ENCODE measurements at regions of chr10 and their contacts with region 1.

Region 1: DNA sequence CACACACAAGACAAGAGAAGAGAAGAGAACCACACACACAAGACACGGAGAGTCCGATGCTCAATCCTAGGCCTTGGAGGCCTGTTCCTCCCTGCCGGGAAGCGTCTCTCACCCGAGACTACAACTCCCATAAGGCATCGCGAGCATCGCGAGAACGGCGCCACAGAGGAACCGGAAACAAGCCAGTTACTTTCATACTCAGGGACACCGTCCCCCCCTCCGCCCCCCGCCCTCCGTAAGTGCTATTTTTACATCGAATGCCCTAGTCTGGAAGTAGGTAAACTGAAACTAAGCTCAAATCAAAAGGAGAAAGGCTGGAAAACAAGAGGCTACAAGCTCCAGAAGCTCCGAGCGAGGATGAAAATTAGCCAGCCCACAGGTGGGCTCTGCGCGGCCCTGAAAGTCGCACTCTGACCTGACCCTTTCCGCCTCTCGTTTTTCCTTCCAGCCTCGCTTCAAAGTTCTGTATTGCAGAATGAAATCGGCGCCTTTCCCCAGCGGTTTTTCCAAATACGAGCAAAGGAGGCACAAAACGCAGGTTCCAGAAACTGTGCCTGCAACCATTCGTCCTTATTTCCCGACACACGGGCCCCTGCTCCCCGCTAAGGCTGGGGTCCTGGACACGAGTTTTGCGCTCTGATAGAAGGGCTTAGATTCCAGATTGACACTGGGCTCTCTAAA is 11.5 kb upstream of the DNAJC12 start:
- DNase-seq: peak; percentile 96
- ATAC-seq: peak; percentile 99
- H3K4me3 Mint-ChIP-seq: peak overlapping the region; percentile 95
- H3K27ac Mint-ChIP-seq: peak overlapping the region; percentile 94
- H3K4me1 Mint-ChIP-seq: peaks cover 2% of the 10 kb centered on the region; the same call in 1 of the 2 replicates
- H3K27me3 Mint-ChIP-seq: no peaks in the 10 kb centered on the region; the same call in 1 of the 2 replicates
- CTCF ChIP-seq: no peak

Region 2: DNA sequence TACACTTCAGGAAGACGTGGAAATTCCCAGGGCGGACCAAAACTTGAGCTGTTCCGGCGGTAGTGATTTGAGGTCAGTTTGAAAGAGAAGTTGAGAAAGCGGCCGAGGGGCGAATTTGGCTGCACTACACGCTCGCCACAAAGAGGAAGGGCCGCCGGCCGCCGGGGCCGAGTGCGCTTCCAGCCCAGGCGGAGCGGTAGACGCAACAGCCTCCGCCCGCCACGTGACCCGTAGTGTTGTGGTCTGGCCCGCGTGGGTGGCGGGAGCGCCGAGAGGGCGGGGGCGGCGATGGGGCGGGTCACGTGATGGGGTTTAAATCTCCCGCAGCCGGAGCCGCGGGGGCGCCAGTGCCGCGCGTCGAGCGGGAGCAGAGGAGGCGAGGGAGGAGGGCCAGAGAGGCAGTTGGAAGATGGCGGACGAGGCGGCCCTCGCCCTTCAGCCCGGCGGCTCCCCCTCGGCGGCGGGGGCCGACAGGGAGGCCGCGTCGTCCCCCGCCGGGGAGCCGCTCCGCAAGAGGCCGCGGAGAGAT is 34.9 kb after region 1 on chr10 and contains the start of gene SIRT1:
- CTCF ChIA-PET with region 1: interaction called, 19 read pairs
- POLR2A ChIA-PET with region 1: interaction called, 4 read pairs
- DNase-seq: peak; percentile 96
- ATAC-seq: peak; percentile 87
- H3K4me3 Mint-ChIP-seq: peak within 1 kb of the TSS; percentile 91
- H3K27ac Mint-ChIP-seq: peak within 1 kb of the TSS; percentile 96
- H3K4me1 Mint-ChIP-seq: peaks cover 20% of the 10 kb centered on the region
- H3K27me3 Mint-ChIP-seq: no peaks in the 10 kb centered on the region
- CTCF ChIP-seq: no peak
- total RNA-seq, gene SIRT1: 51.3 to 55.5 TPM (median 53.9 TPM) in 3 replicates

Region 3: GRCh38 chr10:67912339-67912946 is 63.0 kb after region 1 on chr10:
- CTCF ChIA-PET with region 1: interaction called, 14 read pairs
- POLR2A ChIA-PET with region 1: no interaction called
- DNase-seq: no peak
- ATAC-seq: no peak
- H3K4me3 Mint-ChIP-seq: no peak overlapping the region
- H3K27ac Mint-ChIP-seq: peak overlapping the region; percentile 64
- H3K4me1 Mint-ChIP-seq: peaks cover 10% of the 10 kb centered on the region; the same call in 1 of the 2 replicates
- H3K27me3 Mint-ChIP-seq: no peaks in the 10 kb centered on the region; the same call in 1 of the 2 replicates
- CTCF ChIP-seq: no peak